ENCODE measurements at regions of chr15 and their contacts with region 1.

Region 1: DNA sequence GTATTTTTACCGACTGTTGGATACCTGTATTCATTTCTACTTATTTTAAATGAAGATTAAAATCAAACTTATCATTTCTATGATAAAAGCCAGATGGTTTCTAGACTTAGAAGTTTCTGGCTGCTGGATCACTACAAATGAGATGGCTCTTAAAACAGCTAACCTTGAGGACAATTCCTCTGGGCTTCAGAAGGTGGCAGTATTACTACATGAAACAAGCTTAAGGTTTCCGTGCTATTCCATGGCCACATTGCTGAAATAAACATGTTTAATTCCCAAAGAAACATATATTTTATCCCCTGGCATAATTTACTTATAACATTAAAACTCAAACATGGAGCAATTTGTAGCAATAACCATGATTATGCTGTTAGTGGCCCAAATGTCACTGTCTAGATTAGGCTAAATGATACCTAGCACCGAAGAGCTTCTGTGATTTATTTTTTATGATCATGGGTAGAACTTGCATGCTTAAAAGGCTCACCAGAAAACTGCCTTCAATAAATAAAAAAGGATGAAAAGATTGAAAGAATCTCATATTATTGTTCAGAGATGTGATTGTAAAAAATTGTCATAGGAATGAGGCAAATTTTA is 204.0 kb upstream of the NANOGP8 start:
- DNase-seq: no peak
- H3K4me3 ChIP-seq: no peak overlapping the region
- CTCF ChIP-seq: peak; percentile 71

Region 2: DNA sequence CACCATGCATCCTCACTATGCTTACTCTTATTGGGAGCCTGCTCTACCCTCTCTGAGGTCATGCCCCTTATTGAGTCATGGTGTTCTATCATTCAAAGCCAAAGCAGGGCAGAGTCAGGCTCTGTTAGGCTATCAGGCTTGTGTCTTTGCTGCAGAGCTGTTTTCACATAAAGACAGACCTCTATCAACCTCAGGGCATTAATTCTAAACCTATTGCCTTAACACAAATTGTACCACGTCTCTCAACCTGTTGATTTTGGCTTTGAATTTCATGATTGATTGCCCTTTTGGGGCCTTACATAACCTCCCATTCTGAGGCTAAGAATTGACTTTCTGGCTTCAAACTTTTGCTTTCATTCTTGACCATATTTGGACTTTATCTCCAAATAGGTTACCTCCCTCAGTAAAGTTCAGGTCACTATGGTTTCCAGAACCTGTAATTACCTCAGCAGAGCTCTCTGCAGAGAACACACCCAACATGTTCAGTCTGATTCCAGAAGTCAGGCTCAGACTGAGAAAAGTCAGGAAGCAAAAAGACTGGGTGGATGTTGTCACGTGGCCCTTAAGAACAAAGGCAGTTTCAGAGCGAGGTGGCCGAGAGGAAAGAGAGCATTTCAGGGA is 17.4 kb after region 1 on chr15:
- CTCF ChIA-PET with region 1: interaction called, 25 read pairs
- POLR2A ChIA-PET with region 1: no interaction called
- DNase-seq: no peak
- H3K4me3 ChIP-seq: no peak overlapping the region
- CTCF ChIP-seq: no peak

Region 3: DNA sequence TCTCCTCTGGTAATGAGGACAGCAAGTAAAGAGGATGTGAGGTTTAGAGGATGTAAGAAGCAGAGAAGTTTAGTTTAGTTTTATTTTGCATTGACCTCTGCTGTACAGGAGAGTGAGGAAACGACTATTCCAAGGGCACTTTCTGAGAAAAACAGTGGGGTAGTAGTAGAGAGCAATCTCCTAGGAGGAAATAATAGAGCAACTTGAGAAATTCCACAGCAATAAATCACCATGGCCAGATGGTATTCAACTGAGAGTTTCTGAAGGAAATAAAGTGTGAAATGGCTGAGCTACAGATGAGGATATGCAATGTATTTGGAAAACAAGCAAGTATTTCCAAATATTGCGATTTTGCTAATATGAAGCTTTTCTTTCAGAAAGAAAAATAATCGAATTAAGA is 138.0 kb after region 1 on chr15:
- CTCF ChIA-PET with region 1: interaction called, 18 read pairs
- POLR2A ChIA-PET with region 1: no interaction called
- DNase-seq: no peak
- H3K4me3 ChIP-seq: no peak overlapping the region
- CTCF ChIP-seq: no peak

Region 4: DNA sequence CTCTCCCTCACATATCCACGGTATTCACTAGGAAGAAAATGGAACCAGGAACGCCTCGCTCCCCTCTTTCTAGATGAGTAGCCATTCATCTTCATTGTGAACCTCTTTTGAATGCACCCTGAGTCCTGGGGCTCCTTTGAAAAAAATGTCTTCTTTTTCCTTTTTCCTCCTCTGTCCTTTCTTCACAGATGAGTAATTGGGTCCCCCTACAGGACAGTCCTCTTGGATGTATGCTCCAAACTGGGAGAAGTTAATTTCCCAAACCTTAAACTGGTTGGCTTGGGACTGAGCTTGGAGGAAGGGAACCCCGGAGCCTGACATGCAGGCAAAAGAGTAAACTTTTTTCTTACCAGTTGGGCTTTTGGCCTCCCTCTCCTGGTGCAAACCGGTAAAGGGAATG is 148.0 kb after region 1 on chr15:
- CTCF ChIA-PET with region 1: interaction called, 313 read pairs
- POLR2A ChIA-PET with region 1: no interaction called
- DNase-seq: no peak
- H3K4me3 ChIP-seq: no peak overlapping the region
- CTCF ChIP-seq: no peak

Region 5: GRCh38 chr15:35450492-35450891 is 161.4 kb after region 1 on chr15:
- CTCF ChIA-PET with region 1: interaction called, 313 read pairs
- POLR2A ChIA-PET with region 1: no interaction called
- DNase-seq: peak; percentile 59
- H3K4me3 ChIP-seq: no peak overlapping the region
- CTCF ChIP-seq: no peak

Region 6: DNA sequence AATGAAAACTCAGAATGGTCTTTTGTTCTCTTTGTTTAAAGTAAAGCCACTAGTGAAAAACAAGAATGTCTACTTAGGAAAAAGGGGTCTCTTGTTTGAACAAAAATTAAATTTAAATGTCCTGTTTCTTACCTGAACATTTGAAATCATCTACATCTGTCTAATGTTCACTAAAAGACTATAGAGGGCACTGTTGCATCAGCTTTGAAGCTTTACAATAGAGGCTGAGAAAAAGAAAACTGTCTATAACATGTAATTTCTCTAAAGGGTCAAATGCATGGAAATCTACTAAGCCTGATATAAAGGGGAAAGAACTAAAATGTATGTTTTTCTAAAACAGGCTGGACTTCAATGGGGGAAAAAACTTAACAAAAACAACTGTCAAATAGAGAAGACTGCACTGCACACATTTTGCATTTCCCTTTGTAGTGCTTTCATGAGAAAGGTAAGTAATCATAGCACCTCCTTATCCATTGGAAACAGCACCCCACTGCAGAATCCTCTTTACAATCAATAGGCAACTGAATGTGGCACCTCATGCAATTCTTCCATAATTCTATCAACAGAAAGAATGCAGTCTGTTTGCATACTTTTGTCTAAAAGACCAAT is 230.5 kb after region 1 on chr15:
- CTCF ChIA-PET with region 1: interaction called, 23 read pairs
- POLR2A ChIA-PET with region 1: no interaction called
- DNase-seq: peak; percentile 4
- H3K4me3 ChIP-seq: no peak overlapping the region
- CTCF ChIP-seq: peak; percentile 41

Measured in AG04449 (cell line).